ENCODE measurements at regions of chr13 and their contacts with region 1.

Region 1: GRCh38 chr13:113456116-113456702 is 2.9 kb upstream of the ADPRHL1 start:
- DNase-seq: no peak
- ATAC-seq: no peak
- H3K4me3 ChIP-seq: no peak overlapping the region
- H3K4me3 Mint-ChIP-seq: no peak overlapping the region
- H3K27ac ChIP-seq: no peak overlapping the region
- H3K27ac Mint-ChIP-seq: no peak overlapping the region
- H3K4me1 ChIP-seq: no peaks in the 10 kb centered on the region
- H3K4me1 Mint-ChIP-seq: no peaks in the 10 kb centered on the region
- H3K27me3 ChIP-seq: no peaks in the 10 kb centered on the region
- H3K27me3 Mint-ChIP-seq: no peaks in the 10 kb centered on the region
- CTCF ChIP-seq: no peak

Region 2: DNA sequence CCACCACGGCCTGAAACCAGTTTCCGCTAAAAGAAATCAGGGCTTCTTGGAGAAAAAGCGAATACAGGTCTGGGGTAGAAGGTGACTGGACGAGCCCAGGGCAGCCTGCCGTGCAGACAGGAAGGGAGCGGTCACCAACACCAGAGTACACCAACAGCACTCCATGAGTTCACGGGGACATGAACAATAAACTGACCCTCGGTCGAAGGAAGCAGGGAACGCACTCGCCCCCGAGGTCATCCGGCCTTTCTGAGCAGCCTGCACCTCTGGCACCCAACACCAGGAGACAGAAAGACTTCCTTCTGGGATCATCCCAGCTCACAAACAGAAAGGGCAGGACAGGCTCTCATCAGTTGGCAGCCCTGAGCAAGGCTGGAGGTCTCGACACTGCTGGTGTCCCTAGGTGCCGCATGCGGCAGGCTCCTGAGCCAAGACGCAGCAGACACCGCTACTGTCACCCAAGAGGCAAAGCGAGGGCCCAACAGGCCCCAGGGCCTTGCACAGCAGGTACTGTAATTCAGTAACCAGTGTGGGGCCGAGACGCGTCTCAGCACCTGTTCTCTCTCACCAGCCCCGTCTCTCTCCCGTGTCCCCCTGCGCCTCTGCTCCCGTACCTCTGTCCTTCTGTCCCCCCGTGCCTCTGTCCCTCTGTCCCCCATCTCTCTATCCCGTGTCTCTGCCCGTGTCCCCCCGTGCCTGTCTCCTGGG is 16.3 kb after region 1 on chr13:
- CTCF ChIA-PET with region 1: no interaction called
- POLR2A ChIA-PET with region 1: no interaction called
- intact Hi-C with region 1: loop called in 1 of 2 experiments (anchors 1 kb)
- DNase-seq: no peak
- ATAC-seq: no peak
- H3K4me3 ChIP-seq: no peak overlapping the region
- H3K4me3 Mint-ChIP-seq: no peak overlapping the region
- H3K27ac ChIP-seq: no peak overlapping the region
- H3K27ac Mint-ChIP-seq: no peak overlapping the region
- H3K4me1 ChIP-seq: no peaks in the 10 kb centered on the region
- H3K4me1 Mint-ChIP-seq: no peaks in the 10 kb centered on the region
- H3K27me3 ChIP-seq: no peaks in the 10 kb centered on the region
- H3K27me3 Mint-ChIP-seq: no peaks in the 10 kb centered on the region
- CTCF ChIP-seq: no peak